ENCODE measurements at regions of chr22 and their contacts with region 1.

Region 1: GRCh38 chr22:30947816-30948454 is 20.6 kb downstream of the MORC2 start:
- DNase-seq: no peak

Region 2: GRCh38 chr22:30890686-30891442 is 57.1 kb before region 1 on chr22:
- intact Hi-C with region 1: no loop called
- DNase-seq: peak in 7 of 10 donors; percentile 35 to 94 (median 61)

Region 3: DNA sequence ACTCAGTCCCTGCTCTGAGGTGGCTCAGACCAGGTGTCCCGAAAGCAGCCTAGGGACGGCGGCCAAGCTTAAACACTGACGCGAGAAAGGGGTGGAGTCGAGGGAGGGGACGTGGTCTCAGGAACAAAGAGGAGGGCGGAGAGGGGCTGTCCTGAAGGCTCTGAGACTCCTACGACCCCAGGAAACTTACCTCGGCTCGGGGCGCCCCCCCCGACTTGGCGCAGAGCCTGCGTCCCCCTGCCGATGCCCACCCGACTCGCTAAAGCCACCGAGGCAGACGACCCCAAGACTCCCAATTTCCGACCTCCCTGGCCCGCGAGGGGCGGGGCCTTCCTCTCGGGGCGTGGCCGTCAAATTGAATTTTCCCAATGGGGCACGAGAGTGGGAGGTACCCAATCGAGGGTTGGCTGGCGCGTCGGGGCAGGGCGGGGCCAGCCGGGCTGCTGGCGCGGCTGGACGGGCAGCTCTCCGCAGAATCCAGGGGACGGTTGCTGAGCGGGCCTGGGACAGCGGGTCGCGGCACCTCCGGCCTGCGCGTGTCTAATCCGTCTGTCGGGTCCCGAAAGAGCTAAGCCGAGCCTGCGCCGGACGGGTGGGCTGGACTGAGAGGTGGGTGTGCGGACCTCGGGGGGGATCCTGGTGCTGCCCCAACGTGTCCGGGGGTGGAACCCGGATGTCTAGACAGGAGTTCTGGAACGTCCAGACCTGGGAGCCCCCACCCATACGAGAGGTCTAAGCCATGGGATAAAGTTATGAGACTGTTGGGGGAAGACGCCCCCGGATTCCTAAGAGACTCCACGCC is 133.1 kb after region 1 on chr22 and contains the start of gene SMTN:
- intact Hi-C with region 1: loop called (anchors 2 kb)
- DNase-seq: peak; percentile 45 to 96 (median 76)

Region 4: GRCh38 chr22:31148953-31149627 is 201.2 kb after region 1 on chr22:
- intact Hi-C with region 1: loop called (anchors 5 kb)
- DNase-seq: peak in 9 of 10 donors; percentile 52 to 95 (median 72)

Region 5: GRCh38 chr22:31230871-31231621 is 283.1 kb after region 1 on chr22:
- intact Hi-C with region 1: loop called (anchors 10 kb)
- DNase-seq: peak in 4 of 10 donors; percentile 21 to 50 (median 48)

Measured in posterior cingulate gyrus (tissue), 11 donors.